Activated CD4-positive, alpha-beta memory T cell treated with anti-CD3 and anti-CD28 coated beads, Interleukin-2, amount 10 ng/mL, durations not matched to agents 7 days and 5 days (primary cell): ENCODE measurements at regions of chr4 and their contacts with region 1.

Region 1: DNA sequence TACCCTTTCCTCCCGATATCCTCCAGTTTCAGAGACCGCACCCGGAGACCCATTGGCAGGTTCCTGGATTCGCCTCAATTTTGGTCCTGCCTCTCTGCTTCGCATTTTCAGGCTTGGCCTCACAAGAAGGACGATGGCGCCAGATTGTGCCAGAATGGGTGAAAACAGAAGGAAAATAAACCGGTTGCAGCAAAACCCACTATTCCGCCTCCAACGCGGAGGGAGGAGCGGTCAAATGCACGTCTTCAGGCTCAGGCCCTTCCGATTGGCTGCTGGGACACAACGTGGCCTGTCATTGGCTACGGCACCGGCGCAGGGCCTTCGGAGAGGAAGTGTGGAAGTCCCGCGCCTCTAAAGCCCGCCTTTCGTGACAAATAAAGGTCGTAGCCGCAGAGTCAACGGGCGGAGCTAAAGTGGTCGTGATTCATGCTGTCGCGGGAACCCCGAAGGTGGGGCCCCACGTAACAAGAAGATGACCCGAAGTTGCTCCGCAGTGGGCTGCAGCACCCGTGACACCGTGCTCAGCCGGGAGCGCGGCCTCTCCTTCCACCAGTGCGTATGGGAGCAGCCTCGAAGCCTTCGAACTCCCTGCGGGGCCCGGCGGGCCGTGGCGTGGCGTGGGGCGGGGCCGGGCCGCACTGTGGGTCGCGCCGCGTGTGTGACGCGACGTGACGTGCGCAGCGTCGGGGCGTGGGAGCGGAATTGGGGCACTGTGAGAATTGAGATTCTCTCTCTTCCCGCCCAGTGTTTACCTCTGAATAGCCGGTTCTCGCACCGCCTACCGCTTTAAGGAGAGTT is at the start of gene THAP9:
- DNase-seq: peak; percentile 99
- H3K4me3 Mint-ChIP-seq: no peak within 1 kb of the TSS
- H3K27ac Mint-ChIP-seq: no peak within 1 kb of the TSS
- H3K4me1 Mint-ChIP-seq: peaks cover 37% of the 10 kb centered on the region
- H3K27me3 Mint-ChIP-seq: peaks cover 9% of the 10 kb centered on the region
- total RNA-seq, gene THAP9: 2.0 to 2.4 TPM

Region 2: DNA sequence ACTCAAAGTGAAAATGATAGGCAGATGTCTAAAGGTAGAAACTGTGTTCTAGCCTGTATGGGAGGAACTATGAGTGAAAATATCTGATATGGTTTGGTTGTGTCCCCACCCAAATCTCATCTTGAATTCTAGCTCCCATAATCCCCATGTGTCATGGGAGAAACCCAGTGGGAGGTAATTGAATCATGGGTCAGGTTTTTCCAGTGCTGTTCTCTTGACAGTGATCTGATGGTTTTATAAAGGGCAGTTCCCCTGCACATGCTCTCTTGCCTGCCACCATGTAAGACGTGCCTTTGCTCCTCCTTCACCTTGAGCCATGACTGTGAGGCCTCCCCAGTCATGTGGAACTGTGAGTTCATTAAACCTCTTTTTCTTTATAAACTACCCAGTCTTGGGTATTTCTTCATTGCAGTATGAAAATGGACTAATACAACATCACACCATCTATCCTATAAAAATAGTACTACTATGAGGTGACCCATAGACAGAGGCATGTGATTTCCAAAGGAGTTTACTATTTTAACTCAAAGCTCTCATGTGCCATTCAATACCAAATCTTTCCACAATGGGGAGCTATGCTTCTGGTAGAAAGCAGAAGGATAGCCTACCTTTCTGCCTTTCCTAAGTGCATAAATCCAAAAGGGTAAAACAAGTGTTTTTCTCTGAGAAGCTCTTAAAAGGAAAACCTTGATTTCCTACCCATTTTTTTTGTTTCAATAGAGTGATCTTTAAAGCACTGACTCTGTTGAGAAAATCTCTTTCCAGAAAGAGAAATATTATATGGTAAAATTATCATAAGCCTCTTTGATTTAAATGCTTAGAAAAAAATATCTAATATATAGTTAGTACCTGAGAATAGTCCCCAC is 48.4 kb before region 1 on chr4:
- CTCF ChIA-PET with region 1: interaction called, 22 read pairs
- POLR2A ChIA-PET with region 1: interaction called, 8 read pairs
- DNase-seq: no peak
- H3K4me3 Mint-ChIP-seq: no peak overlapping the region
- H3K27ac Mint-ChIP-seq: no peak overlapping the region
- H3K4me1 Mint-ChIP-seq: peaks cover 3% of the 10 kb centered on the region
- H3K27me3 Mint-ChIP-seq: no peaks in the 10 kb centered on the region

Region 3: GRCh38 chr4:82918091-82918490 is 17.6 kb after region 1 on chr4:
- CTCF ChIA-PET with region 1: no interaction called
- POLR2A ChIA-PET with region 1: no interaction called
- DNase-seq: no peak
- H3K4me3 Mint-ChIP-seq: no peak overlapping the region
- H3K27ac Mint-ChIP-seq: no peak overlapping the region
- H3K4me1 Mint-ChIP-seq: no peaks in the 10 kb centered on the region
- H3K27me3 Mint-ChIP-seq: no peaks in the 10 kb centered on the region

Region 4: GRCh38 chr4:83012687-83013419 is 112.3 kb after region 1 on chr4:
- CTCF ChIA-PET with region 1: interaction called, 17 read pairs
- POLR2A ChIA-PET with region 1: interaction called, 58 read pairs
- DNase-seq: peak; percentile 98
- H3K4me3 Mint-ChIP-seq: peak overlapping the region; percentile 88
- H3K27ac Mint-ChIP-seq: peak overlapping the region; percentile 78
- H3K4me1 Mint-ChIP-seq: peaks cover 38% of the 10 kb centered on the region
- H3K27me3 Mint-ChIP-seq: no peaks in the 10 kb centered on the region